Activated naive CD4-positive, alpha-beta T cell treated with anti-CD3 and anti-CD28 coated beads, Interleukin-2, amount 10 ng/mL, durations not matched to agents 7 days and 5 days (primary cell): ENCODE measurements at regions of chr1 and their contacts with region 1.

Region 1: DNA sequence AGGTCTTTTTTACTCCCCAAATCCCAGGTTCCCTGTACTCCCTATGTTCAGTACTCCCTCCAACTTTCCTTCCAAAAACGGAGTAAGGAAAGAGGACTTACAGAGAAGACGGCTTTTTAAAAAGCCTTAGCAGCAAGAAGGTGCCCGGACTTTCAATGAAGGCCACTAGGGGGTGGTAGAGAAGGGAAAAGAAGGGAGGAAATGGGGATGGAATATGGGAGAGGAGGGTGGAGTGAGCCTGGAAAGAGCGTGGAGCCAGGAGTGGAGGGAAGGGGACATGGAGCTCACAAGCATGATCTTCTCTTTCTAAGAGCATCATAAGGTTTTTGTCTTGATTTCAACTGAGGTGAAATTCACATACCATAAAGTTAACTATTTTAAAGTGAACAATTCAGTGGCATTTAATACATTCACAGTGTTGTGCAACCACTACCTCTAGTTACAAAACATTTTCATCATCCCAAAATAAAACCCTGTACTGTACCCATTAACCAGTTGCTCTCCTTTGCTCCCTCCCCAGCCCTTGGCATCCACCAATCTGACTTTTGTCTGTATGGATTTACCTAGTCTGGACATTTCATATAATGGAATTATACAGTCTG is 129.9 kb downstream of the ZNF281 start:
- DNase-seq: peak; percentile 54
- H3K4me3 Mint-ChIP-seq: no peak overlapping the region
- H3K27ac Mint-ChIP-seq: no peak overlapping the region
- H3K4me1 Mint-ChIP-seq: no peaks in the 10 kb centered on the region
- H3K27me3 Mint-ChIP-seq: peaks cover 8% of the 10 kb centered on the region

Region 2: DNA sequence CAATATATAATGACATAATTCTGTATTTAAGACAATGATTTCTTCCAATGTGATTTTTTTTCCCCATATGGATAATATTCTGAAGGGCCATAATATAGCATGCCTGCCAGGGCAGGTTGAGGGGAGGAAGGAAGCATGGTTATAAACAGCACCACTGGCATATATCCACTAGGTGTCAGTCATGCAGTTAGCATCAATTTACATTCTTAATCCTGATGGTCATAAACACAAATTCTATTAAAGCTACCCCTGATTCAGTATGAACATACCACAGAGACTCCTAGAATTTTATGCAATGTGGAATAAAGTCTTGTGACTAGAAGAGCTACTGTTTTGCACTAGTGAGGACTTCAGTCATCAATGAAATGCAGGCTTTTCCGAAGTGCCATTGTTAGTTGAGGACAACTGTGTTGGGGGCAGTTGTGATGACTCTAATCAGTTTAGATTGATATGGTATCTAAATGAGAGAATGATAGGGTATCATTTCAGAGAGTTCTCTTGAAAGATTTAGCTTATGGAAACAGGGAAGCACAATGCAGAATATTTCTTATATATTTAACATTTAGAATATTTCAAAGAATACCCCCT is 595.1 kb before region 1 on chr1:
- CTCF ChIA-PET with region 1: interaction called, 16 read pairs
- DNase-seq: peak; percentile 27
- H3K4me3 Mint-ChIP-seq: no peak overlapping the region
- H3K27ac Mint-ChIP-seq: no peak overlapping the region
- H3K4me1 Mint-ChIP-seq: no peaks in the 10 kb centered on the region
- H3K27me3 Mint-ChIP-seq: peaks cover 3% of the 10 kb centered on the region

Region 3: GRCh38 chr1:200075938-200076550 is 203.9 kb before region 1 on chr1:
- CTCF ChIA-PET with region 1: no interaction called
- DNase-seq: no peak
- H3K4me3 Mint-ChIP-seq: no peak overlapping the region
- H3K27ac Mint-ChIP-seq: no peak overlapping the region
- H3K4me1 Mint-ChIP-seq: peaks cover 2% of the 10 kb centered on the region
- H3K27me3 Mint-ChIP-seq: peaks cover 34% of the 10 kb centered on the region

Region 4: DNA sequence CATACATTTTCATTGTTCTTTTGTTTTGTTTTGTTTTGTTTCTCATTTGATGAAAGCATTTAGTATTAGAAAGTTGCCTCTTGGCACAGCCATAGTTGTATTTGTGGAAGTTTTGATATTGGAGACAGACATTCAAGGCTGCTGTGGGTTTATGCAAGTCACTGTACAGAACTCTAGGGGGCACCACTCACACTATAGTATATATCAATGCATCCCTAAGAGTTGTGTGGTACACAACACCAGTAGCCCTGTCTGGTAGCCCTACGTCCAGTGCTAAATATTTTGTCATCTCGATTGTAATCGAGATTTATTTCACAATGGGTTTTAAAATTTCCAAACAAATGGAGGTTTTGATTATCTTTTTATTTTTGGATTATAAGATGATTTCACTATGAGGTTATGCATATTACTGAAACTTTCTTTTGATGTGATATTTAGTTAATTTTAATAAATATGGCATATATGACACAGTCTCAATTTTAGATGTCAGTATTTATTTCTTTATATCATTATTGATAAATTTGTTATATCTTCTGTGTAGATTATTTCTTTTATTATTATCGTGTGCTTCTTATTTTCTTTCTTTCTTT is 140.2 kb before region 1 on chr1:
- CTCF ChIA-PET with region 1: interaction called, 10 read pairs
- DNase-seq: peak; percentile 31
- H3K4me3 Mint-ChIP-seq: no peak overlapping the region
- H3K27ac Mint-ChIP-seq: no peak overlapping the region
- H3K4me1 Mint-ChIP-seq: no peaks in the 10 kb centered on the region
- H3K27me3 Mint-ChIP-seq: no peaks in the 10 kb centered on the region

Region 5: DNA sequence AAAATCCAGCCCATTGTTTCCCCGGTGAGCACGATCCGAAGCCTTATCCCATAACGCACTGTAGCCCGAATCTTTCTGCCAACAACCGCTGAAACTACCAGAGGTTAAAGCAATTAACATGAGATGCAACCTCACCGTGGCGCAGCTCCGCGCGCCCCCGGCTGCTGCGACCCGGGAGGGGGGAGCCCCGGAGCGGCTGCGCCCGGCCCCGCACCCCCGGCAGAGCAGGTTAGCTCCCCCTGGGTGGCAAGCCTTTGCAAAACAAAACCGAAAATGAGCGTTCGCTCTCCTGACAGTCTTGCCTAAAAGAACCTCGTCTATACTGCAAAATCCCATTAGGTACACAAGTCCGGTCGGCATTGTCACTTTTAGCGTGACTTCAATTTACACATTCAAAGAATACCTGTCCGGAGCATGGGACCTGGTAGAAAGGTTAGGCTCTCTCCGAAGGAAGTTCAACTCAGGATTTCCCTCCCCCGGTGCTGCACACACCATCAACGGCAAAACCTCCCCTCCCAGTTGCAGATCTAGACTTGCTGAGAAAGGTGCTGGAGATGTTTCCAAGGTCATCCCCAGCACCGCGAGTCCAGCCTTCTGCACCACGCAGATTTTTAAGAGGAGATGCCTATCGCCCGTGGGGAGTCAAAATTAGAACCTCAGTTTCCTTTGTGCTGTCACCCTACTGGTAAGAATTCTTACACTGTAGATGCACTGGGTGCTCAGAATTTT is 22.4 kb after region 1 on chr1:
- CTCF ChIA-PET with region 1: interaction called, 20 read pairs
- DNase-seq: peak; percentile 75
- H3K4me3 Mint-ChIP-seq: peak overlapping the region; percentile 81
- H3K27ac Mint-ChIP-seq: peak overlapping the region; percentile 78
- H3K4me1 Mint-ChIP-seq: peaks cover 15% of the 10 kb centered on the region
- H3K27me3 Mint-ChIP-seq: peaks cover 43% of the 10 kb centered on the region

Region 6: GRCh38 chr1:200488375-200489165 is 208.7 kb after region 1 on chr1:
- CTCF ChIA-PET with region 1: interaction called, 21 read pairs
- DNase-seq: peak; percentile 60
- H3K4me3 Mint-ChIP-seq: no peak overlapping the region
- H3K27ac Mint-ChIP-seq: no peak overlapping the region
- H3K4me1 Mint-ChIP-seq: peaks cover 4% of the 10 kb centered on the region
- H3K27me3 Mint-ChIP-seq: peaks cover 19% of the 10 kb centered on the region

Region 7: DNA sequence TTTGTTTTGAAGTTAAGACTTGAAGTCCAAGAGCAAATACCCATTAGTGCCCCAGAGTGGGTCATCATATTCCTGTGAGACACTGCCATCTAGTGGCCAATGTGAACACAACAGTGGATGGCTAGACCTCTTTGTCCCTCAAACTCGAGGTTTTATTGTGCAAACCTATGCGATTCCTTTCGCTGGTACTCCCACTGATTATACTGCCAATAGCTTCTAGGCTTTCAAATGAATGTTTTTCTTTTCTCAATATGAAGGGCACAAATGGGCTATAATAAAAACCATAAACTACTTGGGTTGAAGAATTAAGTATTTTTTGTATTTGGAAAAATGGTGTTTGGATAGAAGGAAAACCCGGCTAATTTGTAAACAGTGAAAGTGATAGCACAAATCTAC is 230.3 kb after region 1 on chr1:
- CTCF ChIA-PET with region 1: interaction called, 22 read pairs
- DNase-seq: peak; percentile 76
- H3K4me3 Mint-ChIP-seq: no peak overlapping the region
- H3K27ac Mint-ChIP-seq: no peak overlapping the region
- H3K4me1 Mint-ChIP-seq: no peaks in the 10 kb centered on the region
- H3K27me3 Mint-ChIP-seq: peaks cover 36% of the 10 kb centered on the region